AG04449 (cell line): ENCODE measurements at regions of chr18 and their contacts with region 1.

Region 1: GRCh38 chr18:7566567-7567473 is at the start of gene PTPRM:
- DNase-seq: no peak
- H3K4me3 ChIP-seq: peak within 1 kb of the TSS; percentile 77
- CTCF ChIP-seq: peak; percentile 39

Region 2: DNA sequence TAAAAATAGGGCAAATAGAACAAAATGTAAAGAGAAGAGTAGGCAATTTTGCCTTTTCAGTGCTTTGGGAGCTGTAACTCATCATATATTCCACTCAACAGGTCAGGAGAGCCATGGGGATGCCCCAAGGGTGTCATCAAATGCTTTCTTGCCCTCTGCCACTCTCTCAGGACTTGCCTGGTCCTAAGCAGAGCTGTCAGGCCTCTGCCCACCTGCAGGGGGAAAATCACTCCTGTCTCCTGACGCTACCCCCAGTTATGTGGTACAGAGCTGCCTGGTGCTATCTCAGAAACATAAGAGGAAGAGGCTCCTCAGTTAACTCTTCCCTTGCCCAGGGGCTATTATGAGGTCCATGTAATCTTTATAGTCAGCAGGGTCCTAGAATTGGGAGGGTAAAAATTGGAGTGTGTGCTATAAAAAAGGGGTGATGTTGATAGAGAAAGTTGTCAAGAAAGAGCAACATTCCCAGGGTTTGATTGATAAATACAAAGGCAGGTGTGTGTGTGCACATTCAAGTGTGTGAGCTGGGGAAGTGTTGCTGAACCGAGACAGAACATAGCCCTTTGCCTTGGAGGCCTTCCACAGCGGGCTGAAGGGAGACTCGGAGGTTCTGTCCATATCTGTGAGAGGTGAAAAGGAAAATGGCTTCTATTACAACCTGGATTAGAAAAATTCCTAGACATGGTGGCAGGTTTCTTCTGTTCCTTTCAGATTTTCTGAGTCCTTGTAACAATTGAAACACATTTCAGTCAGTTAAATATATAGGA is 25.7 kb after region 1 on chr18:
- CTCF ChIA-PET with region 1: interaction called, 32 read pairs
- POLR2A ChIA-PET with region 1: no interaction called
- DNase-seq: no peak
- H3K4me3 ChIP-seq: no peak overlapping the region
- CTCF ChIP-seq: peak; percentile 5

Region 3: DNA sequence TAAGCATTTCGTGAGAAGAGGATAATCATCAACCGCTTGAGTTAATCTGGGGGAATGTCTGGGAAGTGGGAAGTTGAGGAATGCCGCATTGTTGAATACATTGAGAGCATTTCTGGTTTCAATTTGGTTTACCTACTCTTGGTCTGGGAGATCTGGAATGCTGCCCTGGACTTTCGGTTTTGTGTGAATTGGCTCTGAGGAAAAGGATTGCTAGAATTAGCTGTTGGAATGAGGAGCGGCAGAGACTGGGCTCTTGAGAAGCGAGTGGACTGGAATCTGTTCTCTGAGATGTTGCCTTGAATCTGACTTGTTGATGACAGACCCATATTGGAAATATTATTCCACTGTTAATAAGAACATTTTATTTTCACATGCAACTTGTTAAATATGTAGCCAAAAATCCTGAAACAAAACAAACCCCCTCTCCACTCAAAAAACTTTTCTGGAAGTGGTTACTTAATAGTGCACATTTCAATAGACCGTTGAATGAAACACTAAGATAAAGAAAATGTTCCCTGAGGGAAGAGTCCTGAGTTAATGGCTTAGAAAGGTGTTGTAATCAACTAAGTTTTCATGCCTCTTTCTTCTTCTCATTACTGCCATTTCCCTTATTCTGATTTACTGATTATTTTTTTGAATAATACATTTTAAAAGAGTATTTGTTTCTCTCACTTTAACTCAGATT is 51.1 kb after region 1 on chr18:
- CTCF ChIA-PET with region 1: interaction called, 36 read pairs
- POLR2A ChIA-PET with region 1: interaction called, 8 read pairs
- DNase-seq: peak; percentile 86
- H3K4me3 ChIP-seq: peak overlapping the region; percentile 28
- CTCF ChIP-seq: no peak

Region 4: DNA sequence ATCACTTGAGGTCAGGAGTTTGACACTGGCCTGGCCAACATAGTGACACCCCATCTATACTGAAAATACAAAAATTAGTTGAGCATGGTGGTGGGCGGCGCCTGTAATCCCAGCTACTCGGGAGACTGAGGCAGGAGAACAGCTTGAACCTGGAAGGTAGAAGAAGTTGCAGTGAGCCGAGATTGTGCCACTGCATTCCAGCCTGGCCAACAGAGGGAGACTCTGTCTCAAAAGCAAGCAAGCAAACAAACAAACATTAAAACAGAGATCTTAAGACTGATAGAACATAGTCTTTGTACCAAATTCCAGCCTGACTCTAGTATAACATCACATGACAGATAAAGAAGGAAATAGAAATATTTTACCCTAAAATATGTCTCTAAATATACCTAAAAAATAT is 168.4 kb after region 1 on chr18:
- CTCF ChIA-PET with region 1: interaction called, 11 read pairs
- POLR2A ChIA-PET with region 1: no interaction called
- DNase-seq: no peak
- H3K4me3 ChIP-seq: no peak overlapping the region
- CTCF ChIP-seq: peak; percentile 5

Region 5: GRCh38 chr18:7778181-7778580 is 211.4 kb after region 1 on chr18:
- CTCF ChIA-PET with region 1: interaction called, 10 read pairs
- POLR2A ChIA-PET with region 1: no interaction called
- DNase-seq: no peak
- H3K4me3 ChIP-seq: no peak overlapping the region
- CTCF ChIP-seq: no peak

Region 6: DNA sequence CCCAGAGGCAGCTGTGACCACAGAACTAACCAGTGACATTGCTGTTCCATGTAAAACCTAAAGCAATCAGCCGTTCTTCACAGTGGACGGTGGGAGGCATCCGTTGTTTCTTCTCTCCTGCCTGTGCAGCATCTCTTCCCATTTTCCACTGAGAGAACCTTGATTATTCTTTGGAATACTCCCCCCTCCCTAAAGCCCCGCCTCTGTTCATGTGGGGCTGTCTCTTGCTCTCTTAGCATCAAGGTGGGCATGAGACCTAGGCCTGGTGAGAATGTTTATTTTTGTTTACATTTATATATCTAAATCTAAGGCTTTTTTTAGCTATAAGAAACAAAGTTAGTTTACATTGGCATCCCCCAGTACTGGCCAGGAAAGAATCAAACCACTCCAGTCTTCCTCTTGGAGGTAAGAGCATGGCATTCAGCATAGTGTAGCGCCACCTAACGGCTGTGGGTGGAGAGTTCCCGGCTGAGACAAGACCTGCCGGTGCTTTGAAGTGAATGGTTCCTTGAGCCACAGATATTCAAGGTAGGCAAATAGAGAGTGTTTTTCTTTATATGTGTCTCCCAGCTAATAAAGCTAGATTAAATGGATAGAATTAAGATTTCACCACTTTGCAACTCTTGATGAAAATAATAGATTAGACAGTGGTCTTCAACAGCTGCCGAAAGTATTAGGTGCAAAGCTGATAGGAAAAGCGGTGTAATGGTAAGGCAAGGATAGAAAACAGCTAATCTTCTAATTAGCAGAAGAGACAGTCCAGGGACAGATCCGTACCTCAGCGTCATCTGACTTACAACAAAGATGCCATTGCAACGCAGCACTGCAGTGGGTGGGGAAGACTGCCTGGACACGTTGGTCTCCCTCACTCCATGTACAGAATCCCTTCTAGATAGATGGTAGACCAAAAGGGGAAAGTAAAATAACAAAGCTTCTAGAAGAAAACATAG is 822.8 kb after region 1 on chr18:
- CTCF ChIA-PET with region 1: interaction called, 15 read pairs
- POLR2A ChIA-PET with region 1: no interaction called
- DNase-seq: peak; percentile 17
- H3K4me3 ChIP-seq: no peak overlapping the region
- CTCF ChIP-seq: peak; percentile 85